ENCODE measurements at regions of chr11 and their contacts with region 1.

Region 1: GRCh38 chr11:20127671-20128527 is 32.4 kb downstream of the DBX1 start:
- DNase-seq: peak; percentile 91
- H3K4me3 Mint-ChIP-seq: no peak overlapping the region
- H3K27ac Mint-ChIP-seq: no peak overlapping the region
- H3K4me1 Mint-ChIP-seq: peaks cover 10% of the 10 kb centered on the region
- H3K27me3 Mint-ChIP-seq: peaks cover 19% of the 10 kb centered on the region

Region 2: GRCh38 chr11:19951558-19952115 is 176.3 kb before region 1 on chr11:
- intact Hi-C with region 1: loop called (anchors 5 kb)
- DNase-seq: peak; percentile 71
- H3K4me3 Mint-ChIP-seq: peak overlapping the region; percentile 59
- H3K27ac Mint-ChIP-seq: no peak overlapping the region
- H3K4me1 Mint-ChIP-seq: peaks cover 6% of the 10 kb centered on the region
- H3K27me3 Mint-ChIP-seq: peaks cover 22% of the 10 kb centered on the region

Region 3: GRCh38 chr11:20337526-20338154 is 209.7 kb after region 1 on chr11:
- intact Hi-C with region 1: loop called (anchors 5 kb)
- DNase-seq: no peak
- H3K4me3 Mint-ChIP-seq: no peak overlapping the region
- H3K27ac Mint-ChIP-seq: no peak overlapping the region
- H3K4me1 Mint-ChIP-seq: no peaks in the 10 kb centered on the region
- H3K27me3 Mint-ChIP-seq: peaks cover 52% of the 10 kb centered on the region

Region 4: DNA sequence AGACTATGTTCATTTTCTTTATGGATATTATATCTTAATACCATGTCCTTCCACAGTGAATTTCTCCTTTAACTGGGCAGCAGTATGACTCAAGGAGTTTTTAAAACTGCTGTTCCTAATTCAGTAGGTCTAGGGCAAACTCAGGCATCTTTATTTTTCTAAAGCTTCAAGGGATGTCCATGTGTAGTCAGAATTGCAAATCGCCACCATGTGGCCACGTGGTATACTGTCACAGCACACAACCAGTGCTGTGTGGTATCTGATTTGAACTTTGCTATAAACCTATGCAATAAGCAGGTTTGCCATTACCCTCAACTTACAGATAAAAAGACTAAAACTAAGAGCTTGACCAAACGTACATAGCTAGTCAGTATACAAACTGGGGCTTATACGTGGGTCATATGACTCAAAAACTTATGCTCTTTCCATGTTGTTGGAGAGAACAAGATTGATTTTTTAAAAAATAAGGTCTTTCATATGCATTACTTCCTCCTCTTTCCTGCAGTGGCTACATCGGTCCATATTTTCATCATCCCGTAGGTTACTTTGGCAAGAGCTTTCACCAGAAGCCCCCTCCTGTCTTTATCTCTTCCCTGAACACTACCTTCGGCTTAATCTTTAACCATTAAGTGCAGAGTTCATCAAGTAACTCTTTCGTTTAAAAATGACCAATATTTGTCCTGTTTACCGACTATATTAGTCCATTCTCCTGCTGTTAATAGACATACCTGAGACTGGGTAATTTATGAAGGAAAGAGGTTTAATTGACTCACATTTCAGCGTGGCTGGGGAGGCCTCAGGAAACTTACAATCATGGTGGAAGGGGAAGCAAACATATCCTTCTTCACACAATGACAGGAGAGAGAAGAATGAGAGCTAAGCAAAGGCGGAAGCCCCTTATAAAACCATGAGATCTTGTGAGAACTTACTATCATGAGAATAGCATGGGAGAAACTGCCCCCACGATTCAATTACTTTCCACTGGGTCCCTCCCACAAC is 227.6 kb after region 1 on chr11:
- intact Hi-C with region 1: loop called (anchors 1 kb)
- DNase-seq: peak; percentile 78
- H3K4me3 Mint-ChIP-seq: no peak overlapping the region
- H3K27ac Mint-ChIP-seq: no peak overlapping the region
- H3K4me1 Mint-ChIP-seq: peaks cover 12% of the 10 kb centered on the region
- H3K27me3 Mint-ChIP-seq: peaks cover 6% of the 10 kb centered on the region

Region 5: GRCh38 chr11:20609727-20610707 is 482.1 kb after region 1 on chr11:
- intact Hi-C with region 1: loop called (anchors 1 kb)
- DNase-seq: peak; percentile 90
- H3K4me3 Mint-ChIP-seq: peak overlapping the region; percentile 69
- H3K27ac Mint-ChIP-seq: no peak overlapping the region
- H3K4me1 Mint-ChIP-seq: peaks cover 6% of the 10 kb centered on the region
- H3K27me3 Mint-ChIP-seq: peaks cover 65% of the 10 kb centered on the region